ENCODE measurements at regions of chr2 and their contacts with region 1.

Region 1: GRCh38 chr2:206159346-206160124 is at the starts of genes EEF1B2 and NDUFS1:
- DNase-seq: peak; percentile 99
- ATAC-seq: peak; percentile 95
- H3K4me3 Mint-ChIP-seq: peak within 1 kb of the TSS; percentile 97
- H3K27ac Mint-ChIP-seq: peak within 1 kb of the TSS; percentile 89
- H3K4me1 Mint-ChIP-seq: peaks cover 46% of the 10 kb centered on the region
- H3K27me3 Mint-ChIP-seq: no peaks in the 10 kb centered on the region
- total RNA-seq, gene EEF1B2: 983 to 1,166 TPM
- total RNA-seq, gene NDUFS1: 70.6 to 90.4 TPM

Region 2: DNA sequence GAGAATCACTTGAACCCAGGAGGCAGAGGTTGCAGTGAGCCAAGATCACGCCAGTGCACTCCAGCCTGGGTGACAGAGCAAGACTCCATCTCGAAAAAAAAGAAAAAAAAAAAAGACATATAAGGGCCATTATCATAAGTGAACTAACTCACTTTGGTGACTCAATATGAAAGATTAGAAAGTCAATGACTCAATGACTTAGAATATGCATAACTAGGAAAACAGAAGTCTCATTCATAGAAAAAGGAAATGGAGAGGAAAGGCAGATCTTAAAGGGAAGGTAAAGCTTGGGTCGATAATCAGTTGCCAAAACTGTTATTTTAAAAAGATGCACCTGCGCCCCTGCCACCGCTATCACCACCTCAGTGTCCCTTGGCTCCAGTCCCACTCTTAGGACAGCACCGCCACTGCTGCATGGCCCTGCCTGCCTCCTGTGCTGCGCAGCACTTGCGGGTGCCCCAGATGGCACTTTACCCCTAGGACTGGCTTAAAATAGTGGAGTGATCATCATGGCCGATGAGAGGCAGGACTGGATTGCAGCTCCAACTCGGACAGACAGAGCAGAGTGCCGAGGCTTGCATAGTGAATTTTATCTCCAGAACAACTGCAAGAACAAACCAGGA is 128.3 kb before region 1 on chr2:
- CTCF ChIA-PET with region 1: no interaction called
- POLR2A ChIA-PET with region 1: no interaction called
- intact Hi-C with region 1: loop called (anchors 2 to 5 kb)
- DNase-seq: peak; percentile 19
- ATAC-seq: peak; percentile 96
- H3K4me3 Mint-ChIP-seq: no peak overlapping the region
- H3K27ac Mint-ChIP-seq: peak overlapping the region; percentile 21
- H3K4me1 Mint-ChIP-seq: peaks cover 64% of the 10 kb centered on the region
- H3K27me3 Mint-ChIP-seq: no peaks in the 10 kb centered on the region

Region 3: DNA sequence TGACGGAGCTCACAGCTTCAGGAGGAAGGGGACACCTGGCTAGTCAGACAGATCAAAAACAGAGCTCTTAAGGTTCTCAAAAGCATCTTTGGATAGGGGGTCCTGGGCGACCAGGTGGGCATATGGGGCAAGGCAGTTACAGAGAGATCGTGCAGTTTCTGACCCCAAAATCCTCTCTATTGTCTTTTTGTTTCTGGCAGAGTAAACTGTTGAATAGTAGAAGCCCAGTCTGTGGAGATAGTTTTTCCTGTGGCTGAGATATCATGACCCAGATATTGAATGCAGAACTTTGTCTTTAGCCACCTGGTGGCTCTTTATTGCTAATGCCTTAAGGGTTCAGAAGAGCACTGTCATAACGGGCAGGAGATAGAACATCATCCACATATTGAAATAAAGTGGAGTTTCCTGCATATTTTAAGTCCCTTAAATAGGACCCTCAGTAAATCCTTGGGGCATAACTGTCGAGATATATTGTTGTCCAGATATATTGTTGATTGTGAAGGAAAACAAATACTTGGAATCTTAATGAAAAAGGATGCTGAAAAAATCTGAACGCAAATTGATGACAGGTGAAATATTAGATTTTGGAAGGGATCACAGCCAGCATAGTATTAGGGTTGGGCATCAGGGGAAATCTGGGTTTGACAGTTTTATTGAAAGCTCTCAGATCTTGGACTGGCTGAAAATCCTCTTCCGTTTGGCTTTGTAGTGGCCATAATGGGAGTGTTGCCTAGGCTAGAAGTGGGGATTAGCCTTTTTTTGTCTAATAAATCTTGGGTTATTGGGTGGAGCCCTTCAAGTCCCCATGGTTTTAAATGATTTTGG is 100.9 kb after region 1 on chr2:
- CTCF ChIA-PET with region 1: interaction called, 4 read pairs
- POLR2A ChIA-PET with region 1: no interaction called
- intact Hi-C with region 1: loop called in 1 of 2 experiments (anchors 5 kb)
- DNase-seq: no peak
- ATAC-seq: peak; percentile 78
- H3K4me3 Mint-ChIP-seq: no peak overlapping the region
- H3K27ac Mint-ChIP-seq: no peak overlapping the region
- H3K4me1 Mint-ChIP-seq: peaks cover 3% of the 10 kb centered on the region
- H3K27me3 Mint-ChIP-seq: peaks cover 57% of the 10 kb centered on the region

Region 4: GRCh38 chr2:206353685-206354084 is 194.2 kb after region 1 on chr2:
- CTCF ChIA-PET with region 1: no interaction called
- POLR2A ChIA-PET with region 1: no interaction called
- intact Hi-C with region 1: loop called in 1 of 2 experiments (anchors 5 kb)
- DNase-seq: no peak
- ATAC-seq: no peak
- H3K4me3 Mint-ChIP-seq: no peak overlapping the region
- H3K27ac Mint-ChIP-seq: no peak overlapping the region
- H3K4me1 Mint-ChIP-seq: no peaks in the 10 kb centered on the region
- H3K27me3 Mint-ChIP-seq: peaks cover 2% of the 10 kb centered on the region

Region 5: DNA sequence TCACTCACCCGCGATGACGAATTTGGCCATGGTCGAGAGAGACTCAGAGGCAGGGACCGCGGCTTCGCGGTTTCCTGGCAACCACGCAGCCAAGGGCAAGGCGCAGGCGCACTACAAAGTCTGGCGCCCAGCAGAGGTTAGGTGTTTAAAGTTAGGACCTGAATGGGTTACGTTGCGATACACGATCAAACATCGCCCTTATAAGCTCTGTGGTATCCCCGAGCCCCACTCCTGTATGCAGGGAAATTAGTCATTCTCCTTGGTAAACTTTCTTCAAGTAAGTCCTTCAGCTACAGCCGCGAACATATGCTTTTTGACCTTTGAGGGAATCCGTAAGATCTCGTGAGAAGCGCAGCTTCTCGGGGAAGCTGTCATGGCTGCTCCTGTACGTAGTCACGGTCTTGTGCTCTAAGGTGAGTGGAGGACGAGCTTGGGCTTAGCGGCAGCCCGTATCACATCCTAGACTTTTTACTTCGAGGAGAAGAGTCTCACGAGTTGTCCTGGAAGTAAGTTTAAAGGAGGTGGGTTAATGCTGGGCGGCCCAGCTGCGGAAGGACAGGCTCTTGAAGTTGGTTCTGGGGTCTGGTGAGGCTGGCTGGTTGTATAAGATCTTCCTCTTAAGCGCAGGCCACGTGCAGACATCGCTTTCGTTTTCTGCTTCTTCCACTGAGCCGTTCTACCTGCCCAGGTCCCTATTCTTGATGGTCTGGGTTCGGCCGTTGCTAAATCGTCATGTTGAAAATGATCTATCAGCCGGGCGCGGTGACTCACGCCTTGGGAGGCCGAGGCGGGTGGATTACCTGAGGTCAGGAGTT is 605.9 kb after region 1 on chr2 and contains the starts of genes FASTKD2 and MDH1B:
- CTCF ChIA-PET with region 1: no interaction called
- POLR2A ChIA-PET with region 1: interaction called, 3 read pairs
- intact Hi-C with region 1: loop called in 1 of 2 experiments (anchors 1 kb)
- DNase-seq: peak; percentile 93
- ATAC-seq: peak; percentile 87
- H3K4me3 Mint-ChIP-seq: peak within 1 kb of the TSS; percentile 93
- H3K27ac Mint-ChIP-seq: peak within 1 kb of the TSS; percentile 98
- H3K4me1 Mint-ChIP-seq: peaks cover 37% of the 10 kb centered on the region
- H3K27me3 Mint-ChIP-seq: no peaks in the 10 kb centered on the region
- total RNA-seq, gene FASTKD2: 33.9 to 37.0 TPM
- total RNA-seq, gene MDH1B: 0.83 to 1.3 TPM

Measured in activated CD4-positive, alpha-beta T cell treated with anti-CD3 and anti-CD28 coated beads for 36 hours (primary cell).